ENCODE measurements at regions of chr20 and their contacts with region 1.

Region 1: DNA sequence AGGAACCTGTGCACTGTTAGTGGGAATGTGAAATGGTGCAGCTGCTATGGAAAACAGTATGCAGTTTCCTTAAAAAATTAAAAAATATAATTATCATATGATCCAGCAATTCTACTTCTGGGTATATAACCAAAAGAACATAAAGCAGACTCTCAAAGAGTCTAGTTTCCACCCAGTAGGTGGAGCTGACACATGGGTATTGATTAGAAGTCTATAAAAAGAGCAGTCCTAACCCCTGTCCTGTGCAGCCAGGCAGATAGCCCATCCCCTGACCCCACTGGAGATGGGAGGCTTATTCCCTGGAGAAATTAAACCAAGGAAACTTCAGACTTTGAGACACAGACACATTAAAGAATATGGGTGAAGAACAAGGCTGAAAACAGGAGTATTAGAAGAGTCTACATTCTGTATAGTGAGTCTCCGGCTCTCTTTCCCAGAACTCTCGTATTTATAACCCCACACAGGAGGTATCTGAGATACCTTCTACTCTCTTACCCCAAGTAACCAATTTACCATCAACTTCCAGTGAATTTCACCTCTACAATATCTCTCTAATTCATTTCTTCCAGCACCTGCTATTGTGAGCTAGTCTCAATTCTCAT is 92.3 kb downstream of the SEL1L2 start:
- DNase-seq: no peak
- H3K4me3 ChIP-seq: no peak overlapping the region
- H3K27ac ChIP-seq: no peak overlapping the region
- H3K4me1 ChIP-seq: no peaks in the 10 kb centered on the region
- H3K27me3 ChIP-seq: no peaks in the 10 kb centered on the region
- CTCF ChIP-seq: peak; percentile 34; the same call in 1 of the 2 replicates

Region 2: DNA sequence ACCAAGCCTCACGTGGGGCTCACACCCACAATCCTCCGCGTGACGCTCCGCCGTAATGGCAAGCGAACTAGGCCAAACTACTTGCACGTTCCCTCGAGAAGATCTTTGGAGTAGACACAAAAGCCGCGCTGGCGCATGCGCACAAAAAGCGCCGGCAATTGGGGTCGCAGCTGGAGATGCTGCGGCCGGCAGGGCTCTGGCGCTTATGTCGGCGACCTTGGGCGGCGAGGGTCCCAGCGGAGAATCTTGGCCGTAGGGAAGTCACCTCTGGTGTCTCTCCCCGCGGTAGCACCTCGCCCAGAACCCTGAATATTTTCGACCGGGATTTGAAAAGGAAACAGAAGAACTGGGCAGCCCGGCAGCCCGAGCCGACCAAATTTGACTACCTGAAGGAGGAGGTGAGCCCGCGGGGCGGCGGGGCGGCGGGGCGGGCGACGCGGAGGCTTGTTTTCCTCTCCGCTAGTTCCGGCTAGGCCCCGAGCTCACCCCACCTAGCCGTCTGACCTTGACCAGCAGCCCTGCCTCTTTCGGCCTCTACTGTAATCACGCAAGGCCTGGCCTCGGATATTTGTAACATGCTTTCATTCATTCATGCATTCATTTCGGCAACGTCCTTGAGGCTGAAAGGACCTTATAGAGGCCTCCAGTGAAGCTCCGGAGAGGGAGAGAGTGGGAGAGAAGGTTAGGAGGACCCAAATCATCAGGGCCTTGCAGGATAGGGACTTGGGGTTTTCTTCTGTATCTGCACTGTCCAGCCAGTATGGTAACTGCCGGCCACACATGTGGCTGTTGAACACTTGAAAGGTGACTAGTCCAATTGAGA is 113.0 kb before region 1 on chr20 and contains the starts of genes ESF1 and NDUFAF5:
- CTCF ChIA-PET with region 1: no interaction called
- POLR2A ChIA-PET with region 1: no interaction called
- intact Hi-C with region 1: no loop called
- DNase-seq: peak; percentile 99
- H3K4me3 ChIP-seq: peak within 1 kb of the TSS; percentile 94
- H3K27ac ChIP-seq: peak within 1 kb of the TSS; percentile 81
- H3K4me1 ChIP-seq: peaks cover 7% of the 10 kb centered on the region
- H3K27me3 ChIP-seq: no peaks in the 10 kb centered on the region
- CTCF ChIP-seq: no peak
- total RNA-seq, gene ESF1: 29.4 and 34.7 TPM in 2 replicates
- total RNA-seq, gene NDUFAF5: 49.6 and 57.1 TPM in 2 replicates

Region 3: GRCh38 chr20:13947719-13948118 is 49.6 kb after region 1 on chr20:
- CTCF ChIA-PET with region 1: no interaction called
- POLR2A ChIA-PET with region 1: no interaction called
- intact Hi-C with region 1: loop called (anchors 5 kb)
- DNase-seq: no peak
- H3K4me3 ChIP-seq: no peak overlapping the region
- H3K27ac ChIP-seq: no peak overlapping the region
- H3K4me1 ChIP-seq: no peaks in the 10 kb centered on the region
- H3K27me3 ChIP-seq: no peaks in the 10 kb centered on the region
- CTCF ChIP-seq: no peak

Region 4: DNA sequence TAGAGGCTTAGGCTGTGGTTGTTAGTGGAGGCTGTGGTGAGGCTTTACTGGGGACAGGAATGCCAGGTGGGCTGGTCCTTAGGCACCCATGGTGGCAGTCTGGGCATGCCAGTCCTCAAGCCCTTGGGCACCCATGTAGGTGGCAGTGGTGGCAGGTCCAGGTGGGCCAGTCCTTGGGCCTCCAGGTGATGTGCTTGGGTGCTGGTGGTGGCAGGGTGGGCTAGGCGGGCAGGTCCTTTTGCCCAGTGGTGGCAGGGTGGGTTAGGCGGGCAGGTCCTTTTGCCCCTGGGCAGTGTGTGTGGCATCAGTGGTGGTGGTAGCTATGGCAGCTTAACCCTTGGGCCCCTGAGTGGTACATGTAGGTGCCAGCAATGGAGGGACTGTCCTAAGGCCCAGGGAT is 305.6 kb after region 1 on chr20:
- CTCF ChIA-PET with region 1: no interaction called
- POLR2A ChIA-PET with region 1: no interaction called
- intact Hi-C with region 1: loop called (anchors 10 kb)
- DNase-seq: no peak
- H3K4me3 ChIP-seq: no peak overlapping the region
- H3K27ac ChIP-seq: no peak overlapping the region
- H3K4me1 ChIP-seq: no peaks in the 10 kb centered on the region
- H3K27me3 ChIP-seq: no peaks in the 10 kb centered on the region
- CTCF ChIP-seq: no peak

Measured in A673 (cell line).